ENCODE measurements at regions of chr12 and their contacts with region 1.

Region 1: GRCh38 chr12:49170924-49171323 is 18.0 kb downstream of the TUBA1A start:
- DNase-seq: no peak
- ATAC-seq: no peak
- H3K4me3 ChIP-seq: no peak overlapping the region
- H3K4me3 Mint-ChIP-seq: no peak overlapping the region
- H3K27ac ChIP-seq: no peak overlapping the region
- H3K27ac Mint-ChIP-seq: no peak overlapping the region
- H3K4me1 ChIP-seq: no peaks in the 10 kb centered on the region
- H3K4me1 Mint-ChIP-seq: no peaks in the 10 kb centered on the region
- H3K27me3 ChIP-seq: no peaks in the 10 kb centered on the region
- H3K27me3 Mint-ChIP-seq: no peaks in the 10 kb centered on the region
- CTCF ChIP-seq: no peak

Region 2: GRCh38 chr12:48442191-48442828 is 728.6 kb before region 1 on chr12:
- CTCF ChIA-PET with region 1: no interaction called
- POLR2A ChIA-PET with region 1: no interaction called
- intact Hi-C with region 1: no loop called
- DNase-seq: no peak
- ATAC-seq: no peak
- H3K4me3 ChIP-seq: no peak overlapping the region
- H3K4me3 Mint-ChIP-seq: no peak overlapping the region
- H3K27ac ChIP-seq: no peak overlapping the region
- H3K27ac Mint-ChIP-seq: no peak overlapping the region
- H3K4me1 ChIP-seq: no peaks in the 10 kb centered on the region
- H3K4me1 Mint-ChIP-seq: peaks cover 14% of the 10 kb centered on the region
- H3K27me3 ChIP-seq: no peaks in the 10 kb centered on the region
- H3K27me3 Mint-ChIP-seq: no peaks in the 10 kb centered on the region
- CTCF ChIP-seq: no peak

Region 3: GRCh38 chr12:49138587-49138986 is 32.3 kb before region 1 on chr12:
- CTCF ChIA-PET with region 1: no interaction called
- POLR2A ChIA-PET with region 1: no interaction called
- intact Hi-C with region 1: loop called in 1 of 2 experiments (anchors 5 kb)
- DNase-seq: no peak
- ATAC-seq: no peak
- H3K4me3 ChIP-seq: no peak overlapping the region
- H3K4me3 Mint-ChIP-seq: no peak overlapping the region
- H3K27ac ChIP-seq: no peak overlapping the region
- H3K27ac Mint-ChIP-seq: no peak overlapping the region
- H3K4me1 ChIP-seq: no peaks in the 10 kb centered on the region
- H3K4me1 Mint-ChIP-seq: no peaks in the 10 kb centered on the region
- H3K27me3 ChIP-seq: no peaks in the 10 kb centered on the region
- H3K27me3 Mint-ChIP-seq: no peaks in the 10 kb centered on the region
- CTCF ChIP-seq: no peak

Region 4: GRCh38 chr12:49366652-49367380 is 195.9 kb after region 1 on chr12:
- CTCF ChIA-PET with region 1: no interaction called
- POLR2A ChIA-PET with region 1: no interaction called
- intact Hi-C with region 1: no loop called
- DNase-seq: peak; percentile 69 to 92 (median 81)
- ATAC-seq: peak; percentile 82
- H3K4me3 ChIP-seq: peak overlapping the region; percentile 88
- H3K4me3 Mint-ChIP-seq: peak overlapping the region; percentile 99
- H3K27ac ChIP-seq: peak overlapping the region; percentile 66 to 70
- H3K27ac Mint-ChIP-seq: peak overlapping the region; percentile 76
- H3K4me1 ChIP-seq: peaks cover 15% of the 10 kb centered on the region
- H3K4me1 Mint-ChIP-seq: peaks cover 30% of the 10 kb centered on the region
- H3K27me3 ChIP-seq: no peaks in the 10 kb centered on the region
- H3K27me3 Mint-ChIP-seq: no peaks in the 10 kb centered on the region
- CTCF ChIP-seq: no peak

Measured in CD4-positive, alpha-beta T cell (primary cell).